Activated T-helper 2 cell treated with anti-CD3 and anti-CD28 coated beads, Interferon-gamma antibody, Interleukin-2, Interleukin-4, amounts not matched to agents 10 μg/mL and 5 μg/mL and 100 μg/mL, durations not matched to agents 14 hours and 24 hours and 36 hours (primary cell): ENCODE measurements at regions of chr14 and their contacts with region 1.

Region 1: GRCh38 chr14:67943947-67944346 is 124.4 kb downstream of the RAD51B start:
- DNase-seq: no peak
- H3K4me3 Mint-ChIP-seq: no peak overlapping the region
- H3K27ac Mint-ChIP-seq: no peak overlapping the region
- H3K4me1 Mint-ChIP-seq: peaks cover 2% of the 10 kb centered on the region
- H3K27me3 Mint-ChIP-seq: peaks cover 5% of the 10 kb centered on the region

Region 2: DNA sequence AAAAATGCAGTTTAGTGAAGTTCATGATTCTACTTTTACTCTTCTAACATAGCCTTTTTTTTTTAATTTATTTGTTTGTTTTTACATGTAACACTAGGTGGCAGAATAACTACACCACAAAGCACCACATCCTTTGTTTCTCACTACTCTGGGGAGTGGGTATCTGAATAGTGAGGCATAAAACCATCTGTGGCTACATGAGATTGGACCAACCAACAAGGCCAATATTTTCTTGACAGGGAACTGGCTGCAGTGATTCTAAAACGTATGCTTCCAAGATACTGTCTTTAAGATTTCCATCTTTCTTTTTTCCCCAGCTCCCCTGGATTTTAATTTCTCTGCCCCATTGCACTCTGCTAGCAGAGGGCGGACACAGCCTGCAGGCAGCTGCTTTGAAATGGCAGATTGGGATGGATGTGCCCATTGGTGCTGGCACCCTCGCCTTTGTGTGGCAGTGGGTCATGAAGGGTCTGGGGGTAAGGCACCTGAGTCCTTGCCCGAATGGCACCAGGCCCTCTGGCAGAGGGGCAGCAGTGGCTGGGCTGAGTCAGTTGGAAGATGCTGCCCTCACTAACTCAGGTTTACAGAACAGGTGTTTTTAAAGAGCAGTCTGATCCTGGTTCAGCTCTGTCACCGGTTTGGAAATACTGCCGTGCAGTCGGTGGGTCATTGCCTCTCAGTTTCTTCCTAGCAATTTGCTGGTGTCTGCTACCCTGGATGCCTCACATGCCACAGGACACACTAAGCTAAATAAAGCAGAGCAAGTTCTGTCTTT is 304.7 kb after region 1 on chr14:
- intact Hi-C with region 1: loop called (anchors 5 kb)
- DNase-seq: no peak
- H3K4me3 Mint-ChIP-seq: no peak overlapping the region
- H3K27ac Mint-ChIP-seq: no peak overlapping the region
- H3K4me1 Mint-ChIP-seq: peaks cover 25% of the 10 kb centered on the region
- H3K27me3 Mint-ChIP-seq: no peaks in the 10 kb centered on the region

Region 3: DNA sequence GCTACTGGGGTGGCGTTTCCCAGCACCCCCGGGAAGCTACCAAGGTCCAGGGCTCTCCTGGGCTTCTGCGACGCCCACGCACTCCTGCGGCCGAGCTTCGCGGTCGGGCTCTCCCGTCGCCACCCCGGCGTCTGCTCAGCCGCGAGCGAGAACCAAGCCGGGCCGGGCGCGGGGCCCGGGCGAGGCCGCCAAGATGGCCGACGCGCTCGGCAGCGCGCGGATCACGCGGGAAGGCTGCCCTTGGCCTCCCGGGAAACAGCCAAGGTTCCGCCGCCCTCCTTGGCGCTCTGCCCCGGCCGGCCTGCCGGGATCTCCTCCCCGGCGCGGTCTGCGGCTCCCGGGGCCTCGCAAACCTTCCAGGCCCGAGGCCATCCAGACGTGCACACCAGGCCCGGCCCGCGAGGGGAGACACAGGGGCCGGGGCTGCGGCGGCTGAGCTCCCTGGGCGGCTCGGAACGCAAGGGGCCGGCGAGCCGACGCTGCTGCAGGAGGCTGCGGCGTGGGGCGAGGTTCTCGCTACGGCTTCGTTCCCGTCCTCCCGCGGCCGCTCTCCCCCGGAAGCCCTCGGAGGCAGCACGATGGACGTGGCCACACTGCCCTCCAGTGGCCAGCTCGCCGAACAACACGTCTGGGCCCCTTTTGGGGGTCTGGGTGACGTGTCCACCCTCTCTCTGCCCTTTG is 872.5 kb after region 1 on chr14:
- intact Hi-C with region 1: loop called (anchors 2 kb)
- DNase-seq: peak; percentile 83
- H3K4me3 Mint-ChIP-seq: peak overlapping the region; percentile 79
- H3K27ac Mint-ChIP-seq: peak overlapping the region; percentile 92
- H3K4me1 Mint-ChIP-seq: peaks cover 51% of the 10 kb centered on the region
- H3K27me3 Mint-ChIP-seq: no peaks in the 10 kb centered on the region

Region 4: GRCh38 chr14:68843471-68844209 is 899.7 kb after region 1 on chr14:
- intact Hi-C with region 1: loop called (anchors 2 kb)
- DNase-seq: peak; percentile 59
- H3K4me3 Mint-ChIP-seq: no peak overlapping the region
- H3K27ac Mint-ChIP-seq: no peak overlapping the region
- H3K4me1 Mint-ChIP-seq: peaks cover 21% of the 10 kb centered on the region
- H3K27me3 Mint-ChIP-seq: peaks cover 8% of the 10 kb centered on the region